ENCODE measurements at regions of chr5 and their contacts with region 1.

Region 1: DNA sequence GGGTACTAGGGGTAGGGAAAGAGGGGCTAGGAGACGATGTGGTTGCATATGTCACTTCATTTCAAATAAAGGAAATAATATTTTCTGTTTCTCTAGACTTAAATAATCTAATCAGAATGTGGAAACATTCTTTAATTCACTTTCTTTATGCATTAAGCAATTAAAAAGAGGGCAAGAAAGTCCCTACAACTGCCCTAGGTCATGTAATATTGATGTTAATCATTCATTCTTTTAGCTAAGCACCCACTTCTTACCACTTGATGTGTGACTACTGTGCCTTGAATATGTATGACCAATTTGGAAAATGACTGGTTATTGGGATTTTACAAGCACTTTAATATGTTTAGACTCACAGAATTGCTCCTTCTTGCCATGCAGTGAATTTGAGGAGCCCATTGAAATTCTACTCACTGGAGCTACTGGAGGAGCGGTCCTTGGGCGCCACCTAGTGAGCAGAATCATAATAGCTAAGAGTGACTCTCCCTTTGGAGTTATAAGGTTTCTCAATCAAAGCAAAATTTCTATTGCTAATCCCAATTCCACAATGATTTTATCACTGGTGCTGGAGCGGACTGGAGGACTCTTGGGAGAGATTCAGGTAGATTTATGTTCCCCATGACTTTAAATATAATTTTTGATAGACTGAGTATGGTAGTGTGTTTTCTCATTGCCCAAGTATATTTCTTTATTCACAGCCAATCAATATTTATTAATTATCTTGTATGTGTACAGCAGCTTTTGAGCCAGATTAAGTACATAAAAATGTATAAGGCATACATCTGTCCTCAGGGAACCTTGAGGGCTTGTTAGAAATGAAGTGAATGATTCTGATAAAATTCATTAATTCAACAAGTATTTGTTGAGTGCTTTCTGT is 225.1 kb downstream of the ADGRV1 start:
- DNase-seq: peak; percentile 29
- H3K4me3 ChIP-seq: no peak overlapping the region
- H3K27ac ChIP-seq: no peak overlapping the region
- H3K27me3 ChIP-seq: no peaks in the 10 kb centered on the region
- CTCF ChIP-seq: peak; percentile 95

Region 2: DNA sequence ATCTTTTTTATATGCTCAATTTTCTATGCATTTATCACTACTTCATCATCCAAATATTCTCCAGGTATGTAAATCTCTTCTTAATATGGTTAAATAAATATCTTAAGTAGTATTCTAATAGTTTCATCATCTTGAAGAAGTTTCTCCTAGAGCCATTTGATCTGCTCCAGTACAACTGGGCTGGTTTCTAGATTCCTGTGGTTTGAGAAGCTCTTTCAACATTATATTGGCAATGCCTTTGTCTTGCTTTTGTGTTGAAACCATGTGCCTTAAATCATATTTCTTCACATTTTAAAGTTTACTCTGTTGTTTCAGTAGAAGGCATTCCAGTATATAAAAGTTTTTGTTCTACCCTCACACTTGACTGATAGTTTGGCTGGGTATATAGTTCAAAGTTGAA is 336.7 kb before region 1 on chr5:
- CTCF ChIA-PET with region 1: interaction called, 10 read pairs
- POLR2A ChIA-PET with region 1: no interaction called
- DNase-seq: no peak
- H3K4me3 ChIP-seq: no peak overlapping the region
- H3K27ac ChIP-seq: no peak overlapping the region
- H3K27me3 ChIP-seq: no peaks in the 10 kb centered on the region
- CTCF ChIP-seq: no peak

Region 3: DNA sequence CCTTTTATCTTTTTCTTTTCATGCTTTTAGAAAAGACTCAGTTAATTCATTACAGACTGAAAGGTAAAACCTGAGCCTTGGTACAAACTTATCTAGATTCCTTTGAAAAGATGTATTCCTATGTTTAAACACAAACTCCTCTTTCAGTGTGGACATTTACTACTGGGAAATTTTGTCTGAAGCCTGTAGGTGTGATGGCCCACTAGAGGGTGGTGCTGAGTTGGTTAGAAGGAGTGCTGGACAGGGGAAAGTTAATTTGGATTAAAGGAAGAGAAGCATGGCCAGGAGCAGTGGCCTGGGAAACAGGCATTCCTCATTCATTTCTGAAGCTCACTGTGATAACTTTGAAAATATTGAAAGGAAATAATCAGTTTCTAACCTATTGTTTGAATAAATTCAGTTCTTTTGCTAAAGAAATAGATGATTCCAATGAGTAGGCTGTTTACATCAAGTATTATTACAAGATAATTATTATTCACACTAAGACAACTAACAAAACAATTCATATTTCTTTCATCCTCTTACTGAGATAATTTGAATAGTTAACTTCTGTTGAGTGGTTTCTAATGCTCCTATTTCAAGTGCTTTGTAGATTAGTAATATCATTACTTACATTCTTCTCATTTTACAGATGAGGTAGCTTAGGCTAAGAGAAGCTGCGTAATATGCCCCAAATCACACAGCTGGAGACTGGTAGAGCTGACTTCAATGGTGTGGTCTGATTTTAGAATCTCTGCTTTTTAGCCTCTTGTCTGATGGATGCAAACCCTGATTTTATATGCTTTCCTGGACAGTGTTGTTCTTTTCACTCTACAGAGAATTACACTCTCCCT is 74.2 kb before region 1 on chr5:
- CTCF ChIA-PET with region 1: interaction called, 27 read pairs
- POLR2A ChIA-PET with region 1: no interaction called
- DNase-seq: no peak
- H3K4me3 ChIP-seq: no peak overlapping the region
- H3K27ac ChIP-seq: no peak overlapping the region
- H3K27me3 ChIP-seq: no peaks in the 10 kb centered on the region
- CTCF ChIP-seq: peak; percentile 78

Region 4: DNA sequence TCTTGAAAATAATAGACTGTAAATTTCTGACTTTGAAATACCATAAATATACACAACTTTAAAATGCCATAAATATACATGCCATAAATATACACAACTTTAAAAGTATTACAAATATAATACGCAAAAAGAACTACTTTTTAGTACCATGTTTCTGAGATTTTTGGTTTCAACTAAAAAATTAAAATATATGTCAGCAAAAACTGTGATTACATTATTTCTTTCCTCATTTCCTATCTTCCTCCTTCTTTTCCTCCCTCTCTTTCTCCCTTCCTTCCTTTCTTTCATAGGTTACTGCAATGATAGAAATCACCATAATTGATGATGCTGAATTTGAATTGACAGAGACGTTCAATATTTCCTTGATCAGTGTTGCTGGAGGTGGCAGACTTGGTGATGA is 24.6 kb before region 1 on chr5:
- CTCF ChIA-PET with region 1: interaction called, 13 read pairs
- POLR2A ChIA-PET with region 1: no interaction called
- DNase-seq: no peak
- H3K4me3 ChIP-seq: no peak overlapping the region
- H3K27ac ChIP-seq: no peak overlapping the region
- H3K27me3 ChIP-seq: no peaks in the 10 kb centered on the region
- CTCF ChIP-seq: no peak

Region 5: GRCh38 chr5:90949469-90950358 is 166.0 kb after region 1 on chr5:
- CTCF ChIA-PET with region 1: no interaction called
- POLR2A ChIA-PET with region 1: no interaction called
- DNase-seq: no peak
- H3K4me3 ChIP-seq: no peak overlapping the region
- H3K27ac ChIP-seq: no peak overlapping the region
- H3K27me3 ChIP-seq: no peaks in the 10 kb centered on the region
- CTCF ChIP-seq: no peak

Measured in AG04450 (cell line).